A673 (cell line): ENCODE measurements at regions of chr13 and their contacts with region 1.

Region 1: DNA sequence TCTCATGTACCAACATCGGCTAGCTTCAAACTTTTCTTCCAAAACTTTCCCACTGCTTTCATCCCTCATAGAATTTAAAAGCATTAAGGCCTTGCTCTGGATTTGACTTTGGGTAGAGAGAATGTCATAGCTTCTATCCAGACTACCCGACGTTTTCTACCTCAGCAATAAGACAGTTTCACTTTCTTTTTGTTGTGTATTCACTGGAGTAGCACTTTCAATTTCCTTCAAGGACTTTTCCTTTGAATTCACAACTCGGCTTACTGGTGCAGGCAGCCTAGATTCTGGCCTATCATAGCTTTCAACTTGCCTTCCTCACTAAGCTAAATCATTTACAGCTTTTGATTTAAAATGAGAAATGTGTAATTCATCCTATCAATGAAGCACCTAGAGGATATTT is 420.4 kb upstream of the GPC6 start:
- DNase-seq: no peak
- H3K4me3 ChIP-seq: peak overlapping the region; percentile 25
- H3K27ac ChIP-seq: no peak overlapping the region
- H3K4me1 ChIP-seq: no peaks in the 10 kb centered on the region
- H3K27me3 ChIP-seq: no peaks in the 10 kb centered on the region
- CTCF ChIP-seq: no peak

Region 2: DNA sequence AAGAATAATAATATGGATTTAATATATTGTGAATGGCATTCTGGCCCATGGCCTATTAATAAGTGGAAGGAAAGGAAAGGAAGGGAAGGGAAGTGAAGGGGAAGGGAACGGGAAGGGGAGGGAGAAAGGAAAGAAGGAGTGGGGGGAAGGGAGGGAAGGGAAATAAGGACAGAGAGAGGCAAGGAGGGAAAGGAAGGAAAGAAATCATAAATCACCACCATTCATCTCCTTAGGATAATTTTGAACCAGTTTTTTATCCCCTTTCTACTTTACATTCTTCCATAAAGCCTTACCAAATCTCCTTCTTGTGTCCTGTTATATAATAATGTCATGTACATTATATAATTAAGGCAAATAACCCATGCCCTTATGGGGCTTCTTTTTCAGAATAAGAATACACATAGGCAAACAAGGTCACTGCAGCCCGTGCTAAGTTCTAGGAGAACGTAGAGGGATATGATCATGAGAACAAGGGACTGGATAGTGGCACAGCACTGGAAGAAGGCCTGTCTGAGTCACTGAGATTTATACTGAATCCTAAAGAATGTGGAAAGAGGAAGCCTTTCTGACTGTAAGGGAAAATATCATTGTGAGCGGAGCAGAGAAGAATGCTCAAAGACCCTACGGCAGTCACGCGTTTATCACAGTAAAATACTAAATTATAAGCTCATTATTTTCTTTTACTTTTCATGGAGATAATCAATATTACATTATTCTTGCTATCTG is 24.1 kb before region 1 on chr13:
- CTCF ChIA-PET with region 1: no interaction called
- POLR2A ChIA-PET with region 1: no interaction called
- intact Hi-C with region 1: no loop called
- DNase-seq: no peak
- H3K4me3 ChIP-seq: no peak overlapping the region
- H3K27ac ChIP-seq: no peak overlapping the region
- H3K4me1 ChIP-seq: no peaks in the 10 kb centered on the region
- H3K27me3 ChIP-seq: no peaks in the 10 kb centered on the region
- CTCF ChIP-seq: no peak

Region 3: GRCh38 chr13:92967923-92968322 is 161.7 kb after region 1 on chr13:
- CTCF ChIA-PET with region 1: no interaction called
- POLR2A ChIA-PET with region 1: interaction called, 11 read pairs
- intact Hi-C with region 1: no loop called
- DNase-seq: peak; percentile 42
- H3K4me3 ChIP-seq: no peak overlapping the region
- H3K27ac ChIP-seq: no peak overlapping the region
- H3K4me1 ChIP-seq: no peaks in the 10 kb centered on the region
- H3K27me3 ChIP-seq: no peaks in the 10 kb centered on the region
- CTCF ChIP-seq: peak; percentile 53